ENCODE measurements at regions of chr16 and their contacts with region 1.

Region 1: GRCh38 chr16:81723098-81723723 is 55.9 kb upstream of the PLCG2 start:
- DNase-seq: no peak
- ATAC-seq: peak; percentile 96

Region 2: GRCh38 chr16:81366316-81366932 is 356.8 kb before region 1 on chr16:
- intact Hi-C with region 1: loop called (anchors 2 kb)
- DNase-seq: no peak
- ATAC-seq: peak; percentile 60

Region 3: GRCh38 chr16:81403616-81404373 is 319.4 kb before region 1 on chr16:
- intact Hi-C with region 1: loop called (anchors 5 kb)
- DNase-seq: peak; percentile 91
- ATAC-seq: peak; percentile 98

Region 4: GRCh38 chr16:81623363-81624102 is 99.7 kb before region 1 on chr16:
- intact Hi-C with region 1: loop called (anchors 5 kb)
- DNase-seq: no peak
- ATAC-seq: peak; percentile 47

Measured in Right ventricle myocardium superior (tissue), 1 donor.